ENCODE measurements at regions of chr17 and their contacts with region 1.

Region 1: DNA sequence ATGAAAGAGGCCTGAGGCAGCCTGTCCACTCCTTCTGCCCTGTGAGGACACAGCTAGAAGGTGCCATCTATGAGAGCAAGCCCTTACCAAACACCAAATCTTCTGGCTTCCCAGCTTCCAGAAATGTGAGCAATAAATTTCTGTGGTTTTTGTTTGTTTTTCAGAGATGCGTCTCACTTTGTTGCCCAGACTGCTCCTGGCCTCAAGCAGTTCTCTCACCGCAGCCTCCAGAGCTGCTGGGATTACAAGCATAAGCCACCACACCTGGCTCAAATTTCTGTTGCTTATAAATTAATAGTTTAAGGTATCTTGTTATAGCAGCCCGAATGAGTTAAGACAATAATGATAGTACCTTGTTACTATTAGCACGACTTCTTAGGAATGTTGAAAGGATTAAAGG is 12.5 kb upstream of the SLC16A11 start:
- DNase-seq: no peak
- H3K4me3 ChIP-seq: no peak overlapping the region
- H3K27ac ChIP-seq: no peak overlapping the region
- H3K4me1 ChIP-seq: peaks cover 0 to 6% (median 0%) of the 10 kb centered on the region in 6 donors
- H3K27me3 ChIP-seq: peaks cover 0 to 11% (median 0%) of the 10 kb centered on the region in 7 donors
- CTCF ChIP-seq: no peak
- POLR2A ChIP-seq: no peak

Region 2: DNA sequence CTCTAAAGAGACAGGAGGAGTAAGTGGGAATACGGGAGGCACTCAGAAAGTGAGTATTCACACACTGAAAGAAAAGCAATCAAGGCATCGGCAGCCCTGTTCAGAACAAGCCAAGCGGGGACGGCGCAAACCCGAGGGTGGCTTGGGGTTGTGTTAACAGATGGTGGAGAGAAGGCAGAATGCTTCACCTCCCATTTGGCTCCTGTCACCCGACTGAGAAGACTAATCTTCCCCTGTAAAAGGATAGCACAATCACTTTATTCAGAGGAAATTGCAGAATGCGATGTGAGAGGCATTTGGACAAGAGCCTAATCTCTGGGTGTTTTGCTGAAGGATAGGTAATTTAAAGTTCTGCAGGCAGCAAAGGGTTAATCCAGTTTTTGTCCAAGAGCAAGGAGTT is 1105.5 kb before region 1 on chr17:
- intact Hi-C with region 1: no loop called
- DNase-seq: no peak
- H3K4me3 ChIP-seq: no peak overlapping the region
- H3K27ac ChIP-seq: no peak overlapping the region
- H3K4me1 ChIP-seq: no peaks in the 10 kb centered on the region
- H3K27me3 ChIP-seq: peaks cover 0 to 18% (median 0%) of the 10 kb centered on the region in 7 donors
- CTCF ChIP-seq: no peak
- POLR2A ChIP-seq: no peak

Region 3: GRCh38 chr17:7098802-7099459 is 42.5 kb after region 1 on chr17:
- intact Hi-C with region 1: no loop called
- DNase-seq: no peak
- H3K4me3 ChIP-seq: no peak overlapping the region
- H3K27ac ChIP-seq: peak overlapping the region in 1 of 8 donors; percentile 48
- H3K4me1 ChIP-seq: peaks cover 8 to 37% (median 21%) of the 10 kb centered on the region in 6 donors
- H3K27me3 ChIP-seq: peaks cover 0 to 25% (median 4%) of the 10 kb centered on the region in 7 donors
- CTCF ChIP-seq: no peak
- POLR2A ChIP-seq: no peak

Region 4: GRCh38 chr17:7136266-7136877 is 80.0 kb after region 1 on chr17:
- intact Hi-C with region 1: loop called (anchors 2 kb)
- DNase-seq: peak; percentile 93
- H3K4me3 ChIP-seq: peak overlapping the region in 1 of 8 donors; percentile 1
- H3K27ac ChIP-seq: peak overlapping the region in 2 of 8 donors; percentile 18 to 39
- H3K4me1 ChIP-seq: peaks cover 15 to 50% (median 34%) of the 10 kb centered on the region in 6 donors
- H3K27me3 ChIP-seq: peaks cover 0 to 46% (median 8%) of the 10 kb centered on the region in 7 donors
- CTCF ChIP-seq: peak; percentile 69 to 93 (median 89)
- POLR2A ChIP-seq: no peak